WTC11 (cell line): ENCODE measurements at regions of chr17 and their contacts with region 1.

Region 1: DNA sequence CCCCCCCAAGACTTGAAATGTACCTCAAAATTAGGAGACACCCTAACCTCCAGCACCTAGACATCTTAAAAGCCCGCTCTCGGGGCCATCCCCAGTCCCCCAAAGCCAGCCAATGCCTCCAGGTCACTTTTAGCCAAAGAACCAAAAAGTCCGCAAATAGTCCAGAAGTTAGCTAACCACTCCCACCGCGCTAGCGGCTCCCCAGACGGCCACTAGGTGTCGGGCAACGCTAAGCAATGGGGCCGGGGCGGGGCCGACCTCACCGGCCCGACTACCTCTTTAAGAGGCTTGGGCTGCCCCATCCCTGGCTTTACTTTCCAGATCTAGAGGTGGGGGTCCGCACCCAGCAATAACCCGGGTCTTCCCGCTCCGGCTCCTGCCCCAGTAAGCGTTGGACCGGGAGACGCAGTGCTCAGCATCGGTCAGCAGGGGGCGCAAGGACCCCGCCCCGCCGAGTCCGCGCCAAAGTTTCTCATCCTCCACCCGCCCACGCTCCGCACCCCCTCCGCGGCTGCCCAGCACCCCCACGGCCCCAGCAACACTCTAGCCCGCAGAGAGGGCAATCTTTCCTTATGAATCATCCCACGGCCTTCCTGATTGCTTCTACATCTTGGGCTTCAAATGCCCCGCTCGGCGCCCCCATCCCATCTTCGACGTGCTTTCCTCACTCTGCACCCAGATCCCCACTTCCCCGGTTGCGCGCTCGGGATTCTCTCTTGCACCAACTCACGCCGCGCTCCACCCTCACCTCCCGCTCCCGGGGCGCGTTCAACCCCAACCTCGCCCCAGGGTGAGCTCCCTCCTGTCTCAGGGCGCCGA is 765 bp downstream of the COL1A1 start:
- DNase-seq: peak; percentile 92
- ATAC-seq: peak; percentile 72
- H3K4me3 Mint-ChIP-seq: peak overlapping the region; percentile 86
- H3K27ac Mint-ChIP-seq: no peak overlapping the region
- H3K4me1 Mint-ChIP-seq: peaks cover 23% of the 10 kb centered on the region
- H3K27me3 Mint-ChIP-seq: peaks cover 54% of the 10 kb centered on the region
- CTCF ChIP-seq: peak; percentile 100

Region 2: DNA sequence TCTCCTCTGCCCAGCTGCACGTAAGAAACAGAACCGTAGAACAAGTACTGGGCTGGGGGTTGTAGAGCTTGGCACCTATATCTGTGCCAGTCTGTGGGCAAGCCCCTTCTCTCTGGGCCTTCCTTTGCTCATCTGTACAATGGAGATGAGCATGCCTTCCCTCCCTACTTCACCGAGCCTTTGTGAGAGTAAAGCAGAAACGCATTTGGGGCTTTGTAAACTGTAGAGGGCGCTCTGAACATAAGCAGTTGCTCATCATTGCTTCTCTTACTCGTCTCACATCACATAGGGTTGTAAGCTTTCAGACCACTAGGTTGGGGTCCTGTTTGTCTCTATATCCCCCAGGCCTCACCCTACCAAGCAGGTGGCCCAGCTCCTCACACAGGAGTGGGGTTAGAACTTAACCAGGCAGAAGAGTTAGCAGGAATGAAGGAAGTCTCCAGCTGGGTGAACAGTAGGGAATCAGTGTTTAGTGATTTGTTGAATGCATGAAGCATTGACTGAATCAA is 85.8 kb before region 1 on chr17:
- CTCF ChIA-PET with region 1: interaction called, 12 read pairs
- POLR2A ChIA-PET with region 1: interaction called, 3 read pairs
- DNase-seq: peak; percentile 55
- ATAC-seq: peak; percentile 55
- H3K4me3 Mint-ChIP-seq: peak overlapping the region; percentile 1; the same call in 1 of the 2 replicates
- H3K27ac Mint-ChIP-seq: no peak overlapping the region
- H3K4me1 Mint-ChIP-seq: peaks cover 21% of the 10 kb centered on the region
- H3K27me3 Mint-ChIP-seq: peaks cover 44% of the 10 kb centered on the region
- CTCF ChIP-seq: peak; percentile 40; the same call in 1 of the 2 replicates

Region 3: DNA sequence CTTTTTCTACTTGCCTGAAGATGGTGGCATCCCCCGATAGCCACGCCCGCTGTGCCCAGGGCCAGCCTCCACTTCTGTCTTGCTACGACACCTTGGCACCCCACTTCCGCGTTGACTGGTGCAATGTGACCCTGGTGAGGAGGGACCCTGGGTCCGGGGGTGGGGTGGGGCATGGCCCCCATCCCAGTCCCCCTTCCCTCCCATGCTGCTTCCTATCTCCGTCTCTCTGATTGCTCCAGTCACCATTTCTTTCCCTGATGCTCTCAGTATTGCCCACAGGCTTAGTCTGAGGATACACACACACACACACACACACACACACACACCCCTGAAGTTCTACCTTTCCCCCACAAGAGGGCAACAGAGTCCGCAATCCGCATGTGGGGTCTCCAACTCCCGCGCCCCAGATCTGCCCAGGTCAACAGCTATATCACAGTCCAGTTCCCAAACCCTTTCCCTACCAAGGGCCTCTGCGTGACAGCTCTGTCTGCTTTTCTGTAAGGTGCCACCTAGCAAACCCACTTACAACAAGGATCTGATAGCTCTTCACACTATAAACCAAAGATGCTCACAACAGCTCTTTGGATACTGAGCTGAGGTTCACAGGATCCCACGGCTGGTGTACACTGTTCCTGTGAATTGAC is 31.4 kb before region 1 on chr17:
- CTCF ChIA-PET with region 1: interaction called, 66 read pairs
- POLR2A ChIA-PET with region 1: no interaction called
- DNase-seq: peak; percentile 71
- ATAC-seq: peak; percentile 74
- H3K4me3 Mint-ChIP-seq: no peak overlapping the region
- H3K27ac Mint-ChIP-seq: no peak overlapping the region
- H3K4me1 Mint-ChIP-seq: peaks cover 13% of the 10 kb centered on the region
- H3K27me3 Mint-ChIP-seq: no peaks in the 10 kb centered on the region
- CTCF ChIP-seq: peak; percentile 44

Region 4: GRCh38 chr17:50218771-50219315 is 18.2 kb after region 1 on chr17:
- CTCF ChIA-PET with region 1: interaction called, 155 read pairs
- POLR2A ChIA-PET with region 1: interaction called, 15 read pairs
- DNase-seq: no peak
- ATAC-seq: no peak
- H3K4me3 Mint-ChIP-seq: no peak overlapping the region
- H3K27ac Mint-ChIP-seq: no peak overlapping the region
- H3K4me1 Mint-ChIP-seq: peaks cover 15% of the 10 kb centered on the region
- H3K27me3 Mint-ChIP-seq: no peaks in the 10 kb centered on the region; the same call in 1 of the 2 replicates
- CTCF ChIP-seq: no peak

Region 5: DNA sequence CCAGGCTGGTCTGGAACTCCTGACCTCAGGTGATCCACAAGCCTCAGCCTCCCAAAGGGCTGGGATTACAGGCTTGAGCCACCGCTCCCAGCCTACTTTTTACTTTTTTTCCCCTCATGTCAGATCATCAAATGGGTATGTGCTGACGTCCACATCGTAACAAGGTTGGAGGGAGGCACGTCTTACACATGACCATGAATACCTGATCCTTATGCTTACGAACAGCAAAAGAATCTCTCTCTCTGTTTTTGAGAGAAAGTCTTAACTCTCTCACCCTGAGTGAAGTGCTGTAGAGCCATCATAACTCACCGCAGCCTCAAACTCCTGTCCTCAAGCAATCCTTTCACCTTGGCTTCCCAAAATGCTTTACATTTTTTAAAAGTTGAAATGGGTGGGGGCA is 44.1 kb after region 1 on chr17:
- CTCF ChIA-PET with region 1: no interaction called
- POLR2A ChIA-PET with region 1: no interaction called
- DNase-seq: no peak
- ATAC-seq: no peak
- H3K4me3 Mint-ChIP-seq: no peak overlapping the region
- H3K27ac Mint-ChIP-seq: no peak overlapping the region
- H3K4me1 Mint-ChIP-seq: no peaks in the 10 kb centered on the region
- H3K27me3 Mint-ChIP-seq: peaks cover 8% of the 10 kb centered on the region; the same call in 1 of the 2 replicates
- CTCF ChIP-seq: no peak

Region 6: GRCh38 chr17:50289991-50290702 is 89.5 kb after region 1 on chr17:
- CTCF ChIA-PET with region 1: interaction called, 183 read pairs
- POLR2A ChIA-PET with region 1: no interaction called
- DNase-seq: no peak
- ATAC-seq: peak; percentile 26
- H3K4me3 Mint-ChIP-seq: no peak overlapping the region
- H3K27ac Mint-ChIP-seq: no peak overlapping the region
- H3K4me1 Mint-ChIP-seq: peaks cover 17% of the 10 kb centered on the region; the same call in 1 of the 2 replicates
- H3K27me3 Mint-ChIP-seq: no peaks in the 10 kb centered on the region; the same call in 1 of the 2 replicates
- CTCF ChIP-seq: no peak

Region 7: DNA sequence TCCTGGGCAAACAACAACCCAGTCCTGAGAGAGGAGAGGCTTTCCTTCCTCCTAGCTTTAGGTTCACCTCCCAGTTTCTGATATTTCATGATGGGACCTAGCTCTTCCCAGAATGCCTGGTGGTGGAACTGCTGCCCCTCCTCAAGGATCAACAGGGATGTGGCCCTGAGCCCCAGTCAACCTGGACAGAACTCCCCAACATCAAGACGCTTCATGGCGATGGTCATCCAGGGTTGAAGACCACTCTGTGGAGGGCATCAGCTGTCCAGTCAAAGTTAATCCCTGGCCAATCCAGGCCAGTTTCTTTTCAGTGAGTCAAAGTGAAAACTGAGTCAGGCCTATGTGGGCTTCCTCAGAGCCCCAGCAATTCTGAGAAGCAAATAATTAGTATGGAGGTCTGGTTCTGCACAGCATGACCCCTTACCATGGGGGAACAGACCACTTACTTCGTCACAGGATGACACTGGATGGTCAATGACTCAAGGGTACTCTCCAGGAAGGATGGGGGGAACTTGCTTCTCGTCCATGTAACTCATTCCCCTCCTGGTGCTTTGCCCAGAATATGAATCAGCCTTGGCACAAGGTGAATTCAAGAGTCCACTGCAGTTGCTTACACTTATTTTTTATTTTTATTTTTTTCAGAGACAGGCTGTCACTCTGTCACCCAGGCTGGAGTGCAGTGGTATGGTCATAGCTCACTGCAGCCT is 130.6 kb after region 1 on chr17:
- CTCF ChIA-PET with region 1: interaction called, 35 read pairs
- POLR2A ChIA-PET with region 1: no interaction called
- DNase-seq: no peak
- ATAC-seq: no peak
- H3K4me3 Mint-ChIP-seq: no peak overlapping the region
- H3K27ac Mint-ChIP-seq: no peak overlapping the region
- H3K4me1 Mint-ChIP-seq: peaks cover 17% of the 10 kb centered on the region
- H3K27me3 Mint-ChIP-seq: no peaks in the 10 kb centered on the region
- CTCF ChIP-seq: no peak

Region 8: DNA sequence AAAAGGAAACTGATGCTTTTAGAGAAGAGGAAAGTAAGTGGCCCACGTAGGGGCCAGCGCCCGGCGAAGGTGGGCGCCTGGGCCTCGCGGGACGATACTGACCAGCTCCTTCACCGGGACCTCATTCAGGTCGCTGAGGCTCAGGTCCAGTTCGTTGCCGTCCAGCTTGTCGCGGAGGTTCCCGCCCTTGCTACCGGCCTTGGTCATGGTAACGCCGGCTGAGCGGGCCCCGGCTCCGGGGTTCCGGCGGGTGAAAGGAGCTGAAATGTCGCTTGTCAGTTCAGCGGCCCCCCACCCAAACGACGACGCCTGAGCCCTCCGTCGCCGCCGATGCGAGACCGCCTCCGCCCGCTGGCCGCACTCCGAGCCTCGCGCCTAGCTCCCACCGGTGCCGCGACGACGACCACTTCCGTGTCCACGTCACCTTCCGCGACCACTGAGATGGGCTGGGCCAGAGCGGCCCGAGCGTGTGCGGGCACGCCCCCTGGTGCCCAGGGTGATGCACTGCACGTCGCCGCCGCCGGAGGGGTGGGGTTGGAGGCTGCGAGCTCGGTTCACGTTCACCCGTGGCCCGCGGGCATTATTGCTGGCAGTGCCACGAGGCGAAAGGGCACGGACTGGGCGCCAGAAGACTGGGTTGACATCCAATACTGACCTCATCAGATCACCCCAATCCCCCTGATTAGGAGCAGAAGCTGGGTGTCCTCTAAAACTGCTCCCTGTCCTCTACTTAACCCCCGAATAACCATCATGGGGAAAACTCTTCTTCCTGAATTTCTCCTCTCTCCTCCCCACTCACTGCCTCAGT is 196.6 kb after region 1 on chr17 and contains the start of gene LRRC59:
- CTCF ChIA-PET with region 1: interaction called, 25 read pairs
- POLR2A ChIA-PET with region 1: no interaction called
- DNase-seq: peak; percentile 88
- ATAC-seq: peak; percentile 93
- H3K4me3 Mint-ChIP-seq: peak within 1 kb of the TSS; percentile 93
- H3K27ac Mint-ChIP-seq: no peak within 1 kb of the TSS
- H3K4me1 Mint-ChIP-seq: peaks cover 10% of the 10 kb centered on the region
- H3K27me3 Mint-ChIP-seq: peaks cover 7% of the 10 kb centered on the region
- CTCF ChIP-seq: peak; percentile 98
- total RNA-seq, gene LRRC59: 89.3 to 108 TPM (median 90.4 TPM) in 3 replicates